ENCODE measurements at regions of chr18 and their contacts with region 1.

Region 1: GRCh38 chr18:67500522-67501205 is 15.9 kb downstream of the DSEL start:
- DNase-seq: peak; percentile 28
- ATAC-seq: peak; percentile 12; the same call in 1 of the 2 replicates
- H3K4me3 ChIP-seq: no peak overlapping the region
- H3K27ac ChIP-seq: no peak overlapping the region
- H3K4me1 ChIP-seq: peaks cover 6% of the 10 kb centered on the region
- H3K27me3 ChIP-seq: no peaks in the 10 kb centered on the region
- CTCF ChIP-seq: no peak
- POLR2A ChIP-seq: no peak
- RAD21 ChIP-seq: no peak

Region 2: DNA sequence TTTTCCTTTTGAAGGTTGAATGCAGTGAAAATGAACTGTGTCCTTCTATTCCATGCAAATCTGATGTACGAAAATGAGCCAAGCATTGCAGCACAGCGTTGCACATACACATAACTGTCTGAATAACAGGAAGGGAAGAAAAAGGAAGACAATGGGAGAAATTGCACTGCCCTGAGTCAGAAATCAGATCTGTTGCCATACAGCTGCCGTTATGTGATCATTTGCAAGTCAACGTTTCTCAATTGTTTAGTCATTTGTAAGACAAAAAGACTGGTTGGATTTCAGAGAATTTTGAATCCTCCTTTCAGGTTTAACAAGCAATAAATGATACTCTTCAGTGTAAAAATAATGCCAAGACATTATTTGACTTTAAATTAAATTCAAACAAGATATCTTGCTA is 268.3 kb before region 1 on chr18:
- CTCF ChIA-PET with region 1: no interaction called
- POLR2A ChIA-PET with region 1: no interaction called
- dilution Hi-C with region 1: no loop called
- in situ Hi-C with region 1: no loop called
- intact Hi-C with region 1: loop called (anchors 5 kb)
- DNase-seq: peak; percentile 62
- ATAC-seq: no peak
- H3K4me3 ChIP-seq: no peak overlapping the region
- H3K27ac ChIP-seq: no peak overlapping the region
- H3K4me1 ChIP-seq: no peaks in the 10 kb centered on the region
- H3K27me3 ChIP-seq: no peaks in the 10 kb centered on the region
- CTCF ChIP-seq: no peak
- POLR2A ChIP-seq: no peak
- RAD21 ChIP-seq: no peak

Region 3: GRCh38 chr18:67520351-67520921 is 19.8 kb after region 1 on chr18:
- CTCF ChIA-PET with region 1: no interaction called
- POLR2A ChIA-PET with region 1: no interaction called
- dilution Hi-C with region 1: no loop called
- in situ Hi-C with region 1: no loop called
- intact Hi-C with region 1: no loop called
- DNase-seq: peak; percentile 76
- ATAC-seq: no peak
- H3K4me3 ChIP-seq: no peak overlapping the region
- H3K27ac ChIP-seq: peak overlapping the region; percentile 74; the same call in 1 of the 2 replicates
- H3K4me1 ChIP-seq: peaks cover 9% of the 10 kb centered on the region
- H3K27me3 ChIP-seq: no peaks in the 10 kb centered on the region
- CTCF ChIP-seq: no peak
- POLR2A ChIP-seq: no peak
- RAD21 ChIP-seq: no peak

Region 4: DNA sequence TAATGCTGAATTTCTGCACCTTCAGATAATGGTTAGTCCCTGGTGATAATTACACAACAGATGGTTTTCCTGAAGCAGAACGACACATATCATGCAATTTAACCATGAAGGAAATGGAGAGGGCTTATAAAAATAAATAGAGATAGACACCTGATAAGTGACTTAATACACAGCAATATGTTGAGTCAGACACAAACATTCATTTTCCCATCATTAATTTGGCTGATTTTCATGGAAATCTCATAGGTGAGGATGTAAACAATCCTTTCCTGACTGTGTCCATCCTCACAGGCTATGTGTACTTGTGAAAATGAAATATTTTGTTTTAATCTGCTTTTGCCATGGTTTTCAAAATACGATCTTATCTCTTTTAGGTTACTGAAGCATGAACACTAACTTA is 52.8 kb after region 1 on chr18:
- CTCF ChIA-PET with region 1: no interaction called
- POLR2A ChIA-PET with region 1: no interaction called
- dilution Hi-C with region 1: no loop called
- in situ Hi-C with region 1: no loop called
- intact Hi-C with region 1: no loop called
- DNase-seq: peak; percentile 31
- ATAC-seq: no peak
- H3K4me3 ChIP-seq: no peak overlapping the region
- H3K27ac ChIP-seq: no peak overlapping the region
- H3K4me1 ChIP-seq: no peaks in the 10 kb centered on the region; the same call in 1 of the 2 replicates
- H3K27me3 ChIP-seq: no peaks in the 10 kb centered on the region
- CTCF ChIP-seq: no peak
- POLR2A ChIP-seq: no peak
- RAD21 ChIP-seq: no peak

Region 5: GRCh38 chr18:68406761-68407160 is 906.1 kb after region 1 on chr18:
- CTCF ChIA-PET with region 1: no interaction called
- POLR2A ChIA-PET with region 1: no interaction called
- dilution Hi-C with region 1: no loop called
- in situ Hi-C with region 1: no loop called
- intact Hi-C with region 1: no loop called
- DNase-seq: no peak
- ATAC-seq: peak; percentile 17
- H3K4me3 ChIP-seq: no peak overlapping the region
- H3K27ac ChIP-seq: no peak overlapping the region
- H3K4me1 ChIP-seq: no peaks in the 10 kb centered on the region
- H3K27me3 ChIP-seq: no peaks in the 10 kb centered on the region
- CTCF ChIP-seq: no peak
- POLR2A ChIP-seq: no peak
- RAD21 ChIP-seq: no peak

Measured in IMR-90 (cell line).